ENCODE measurements at regions of chr12 and their contacts with region 1.

Region 1: DNA sequence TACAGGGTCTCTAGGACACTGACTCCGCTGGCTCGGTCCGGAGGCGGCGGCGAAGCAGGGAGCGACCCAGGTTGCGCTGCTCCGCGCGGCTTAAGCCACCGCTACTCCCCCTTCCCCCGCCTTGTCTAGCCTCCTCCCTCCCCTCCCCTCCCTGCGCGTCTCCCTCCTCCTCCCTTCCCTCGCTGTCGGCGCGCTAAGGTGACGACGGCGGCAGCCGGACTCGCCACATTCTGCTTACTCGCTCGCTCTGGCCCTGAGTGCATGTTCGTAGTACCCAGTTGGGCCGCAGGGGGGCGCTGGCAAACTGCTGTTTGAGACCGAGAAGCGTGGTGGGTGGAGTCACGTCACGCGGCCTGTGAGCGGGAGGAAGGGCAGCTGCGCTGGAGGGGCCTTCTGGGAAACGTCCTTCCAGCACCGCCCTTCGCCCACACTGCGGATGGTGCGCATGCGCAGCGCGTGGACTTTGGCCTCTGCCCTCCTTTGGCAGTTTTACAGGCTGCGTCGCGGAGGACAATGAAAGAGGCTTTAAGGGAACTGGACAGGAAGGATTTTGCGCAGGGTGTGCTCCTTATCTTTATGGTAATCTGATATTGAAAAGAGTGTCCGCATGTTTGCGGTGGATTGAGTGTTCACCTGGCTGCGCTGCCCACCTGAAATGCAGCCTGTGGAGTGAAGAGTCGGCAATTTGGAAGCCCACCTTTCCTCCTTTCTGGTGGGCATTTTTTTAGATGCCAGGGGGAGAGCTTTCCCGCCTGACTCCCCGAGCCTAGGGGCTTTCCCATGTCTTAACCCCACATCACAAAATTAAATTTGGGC is at the start of gene SCAF11:
- DNase-seq: peak; percentile 100
- H3K4me3 ChIP-seq: peak within 1 kb of the TSS; percentile 67 to 85
- H3K27ac ChIP-seq: peak within 1 kb of the TSS; percentile 98
- H3K4me1 ChIP-seq: peaks cover 20 to 27% of the 10 kb centered on the region in 2 donors
- H3K27me3 ChIP-seq: no peaks in the 10 kb centered on the region
- CTCF ChIP-seq: peak; percentile 94 to 99 (median 97)
- total RNA-seq, gene SCAF11: 35.7 TPM

Region 2: GRCh38 chr12:45728630-45729232 is 261.9 kb before region 1 on chr12:
- intact Hi-C with region 1: loop called (anchors 2 kb)
- DNase-seq: peak; percentile 88 to 98
- H3K4me3 ChIP-seq: peak overlapping the region; percentile 74 to 95
- H3K27ac ChIP-seq: peak overlapping the region; percentile 99
- H3K4me1 ChIP-seq: peaks cover 0 to 26% of the 10 kb centered on the region in 2 donors
- H3K27me3 ChIP-seq: no peaks in the 10 kb centered on the region
- CTCF ChIP-seq: peak; percentile 89 to 97 (median 93)

Region 3: GRCh38 chr12:45933504-45933903 is 57.2 kb before region 1 on chr12:
- intact Hi-C with region 1: loop called (anchors 5 kb)
- DNase-seq: no peak
- H3K4me3 ChIP-seq: no peak overlapping the region
- H3K27ac ChIP-seq: peak overlapping the region; percentile 54 to 63
- H3K4me1 ChIP-seq: peaks cover 7 to 18% of the 10 kb centered on the region in 2 donors
- H3K27me3 ChIP-seq: no peaks in the 10 kb centered on the region
- CTCF ChIP-seq: no peak

Region 4: GRCh38 chr12:46153268-46153872 is 162.7 kb after region 1 on chr12:
- intact Hi-C with region 1: loop called (anchors 10 kb)
- DNase-seq: no peak
- H3K4me3 ChIP-seq: no peak overlapping the region
- H3K27ac ChIP-seq: no peak overlapping the region
- H3K4me1 ChIP-seq: peaks cover 0 to 4% of the 10 kb centered on the region in 2 donors
- H3K27me3 ChIP-seq: no peaks in the 10 kb centered on the region
- CTCF ChIP-seq: peak; percentile 8 to 73 (median 60)

Region 5: DNA sequence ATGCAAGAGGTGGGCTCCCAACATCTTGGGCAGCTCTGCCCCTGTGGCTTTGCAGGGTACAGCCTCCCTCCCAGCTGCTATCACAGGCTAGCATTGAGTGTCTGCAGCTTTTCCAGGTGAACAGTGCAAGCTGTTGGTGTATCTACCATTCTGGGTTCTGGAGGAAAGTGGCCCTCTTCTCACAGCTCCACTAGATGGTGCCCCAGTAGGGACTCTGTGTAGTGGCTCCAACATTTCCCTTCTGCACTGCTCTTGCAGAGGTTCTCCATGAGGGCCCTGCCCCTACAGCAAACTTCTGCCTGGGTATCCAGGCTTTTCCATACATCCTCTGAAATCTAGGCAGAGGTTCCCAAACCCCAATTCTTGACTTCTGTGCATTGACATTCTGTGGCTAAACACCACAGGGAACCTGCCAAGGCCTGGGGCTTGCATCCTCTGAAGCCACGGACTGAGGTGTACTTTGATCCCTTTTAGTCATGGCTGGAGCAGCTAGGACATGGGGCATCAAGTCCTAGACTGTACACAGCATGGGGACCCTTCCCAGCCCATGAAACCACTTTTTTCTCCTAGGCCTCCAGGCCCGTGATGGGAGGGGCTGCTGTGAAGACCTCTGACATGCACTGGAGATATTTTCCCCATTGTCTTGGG is 302.2 kb after region 1 on chr12:
- intact Hi-C with region 1: loop called (anchors 10 kb)
- DNase-seq: no peak
- H3K4me3 ChIP-seq: no peak overlapping the region
- H3K27ac ChIP-seq: no peak overlapping the region
- H3K4me1 ChIP-seq: no peaks in the 10 kb centered on the region
- H3K27me3 ChIP-seq: no peaks in the 10 kb centered on the region
- CTCF ChIP-seq: peak in 2 of 3 experiments; percentile 8 to 30

Region 6: GRCh38 chr12:46661110-46661845 is 670.6 kb after region 1 on chr12:
- intact Hi-C with region 1: loop called (anchors 5 kb)
- DNase-seq: no peak
- H3K4me3 ChIP-seq: peak overlapping the region in 1 of 2 donors; percentile 4
- H3K27ac ChIP-seq: peak overlapping the region; percentile 72 to 80
- H3K4me1 ChIP-seq: peaks cover 6 to 35% of the 10 kb centered on the region in 2 donors
- H3K27me3 ChIP-seq: no peaks in the 10 kb centered on the region
- CTCF ChIP-seq: peak; percentile 73 to 88 (median 78)